Gastrocnemius medialis (tissue), 4 donors: ENCODE measurements at regions of chr19 and their contacts with region 1.

Region 1: GRCh38 chr19:35135389-35135909 is 590 bp upstream of the LGI4 start:
- DNase-seq: peak; percentile 67 to 83
- ATAC-seq: peak; percentile 29 to 34
- H3K4me3 ChIP-seq: peak overlapping the region; percentile 46 to 53 (median 50)
- H3K27ac ChIP-seq: peak overlapping the region; percentile 99 to 100 (median 99)
- H3K4me1 ChIP-seq: peaks cover 33 to 38% of the 10 kb centered on the region in 2 donors
- H3K27me3 ChIP-seq: no peaks in the 10 kb centered on the region
- CTCF ChIP-seq: peak; percentile 94 to 98 (median 97)
- POLR2A ChIP-seq: no peak

Region 2: DNA sequence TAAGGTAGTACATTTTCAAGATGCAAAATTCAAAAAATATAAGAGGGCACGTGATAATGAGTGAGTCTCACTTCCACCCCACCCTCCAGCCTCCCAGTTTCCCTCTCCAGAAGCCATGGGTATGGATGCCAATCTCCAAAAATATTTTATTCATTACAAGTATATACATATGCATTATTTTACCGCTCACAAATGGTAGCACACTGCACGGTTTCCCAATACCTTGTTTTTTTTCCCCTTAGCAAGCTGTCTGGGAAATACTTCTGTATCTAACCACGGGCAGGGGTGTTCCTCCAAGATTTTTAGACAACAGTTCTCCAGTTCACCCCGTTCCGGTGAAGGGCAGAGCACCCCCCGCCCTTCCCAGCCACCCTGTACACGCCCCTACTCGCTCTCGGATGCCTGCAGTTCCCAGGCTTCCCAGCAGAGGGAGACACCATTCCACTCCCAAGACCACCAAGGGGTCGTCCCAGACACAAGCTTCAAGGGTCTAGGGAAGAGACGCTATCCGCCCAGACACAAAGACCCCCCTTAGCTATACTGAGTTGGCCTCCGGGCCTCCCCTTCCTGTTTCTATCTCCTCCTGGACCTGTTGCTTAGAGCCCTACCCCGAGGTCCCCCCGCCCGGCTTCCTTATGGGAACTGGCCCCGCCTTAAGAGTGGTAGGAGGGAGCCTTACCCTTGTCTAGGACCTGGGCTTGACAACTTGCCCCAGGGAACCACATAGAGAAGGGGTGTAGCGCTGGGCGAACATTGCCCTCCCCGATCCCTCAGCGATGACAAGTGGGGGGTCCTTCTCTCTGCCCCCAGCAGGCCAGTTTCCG is 20.9 kb before region 1 on chr19:
- in situ Hi-C with region 1: no loop called
- intact Hi-C with region 1: loop called (anchors 1 kb)
- DNase-seq: peak in 1 of 2 donors; percentile 49
- ATAC-seq: peak; percentile 74
- H3K4me3 ChIP-seq: peak overlapping the region; percentile 32 to 55 (median 48)
- H3K27ac ChIP-seq: peak overlapping the region in 3 of 4 donors; percentile 34 to 45 (median 41)
- H3K4me1 ChIP-seq: peaks cover 6 to 15% of the 10 kb centered on the region in 2 donors
- H3K27me3 ChIP-seq: no peaks in the 10 kb centered on the region
- CTCF ChIP-seq: peak; percentile 91 to 98 (median 97)
- POLR2A ChIP-seq: no peak